Activated CD8-positive, alpha-beta T cell treated with anti-CD3 and anti-CD28 coated beads, Interleukin-2, amount 10 ng/mL, durations not matched to agents 7 days and 5 days (primary cell): ENCODE measurements at regions of chrX and their contacts with region 1.

Region 1: GRCh38 chrX:133921764-133922389 is 63.5 kb downstream of the GPC3 start:
- DNase-seq: peak; percentile 41
- ATAC-seq: no peak
- H3K4me3 Mint-ChIP-seq: no peak overlapping the region
- H3K27ac Mint-ChIP-seq: no peak overlapping the region
- H3K4me1 Mint-ChIP-seq: peaks cover 18% of the 10 kb centered on the region
- H3K27me3 Mint-ChIP-seq: no peaks in the 10 kb centered on the region

Region 2: GRCh38 chrX:134026565-134027311 is 104.9 kb after region 1 on chrX:
- CTCF ChIA-PET with region 1: interaction called, 11 read pairs
- POLR2A ChIA-PET with region 1: no interaction called
- DNase-seq: peak; percentile 37
- ATAC-seq: no peak
- H3K4me3 Mint-ChIP-seq: no peak overlapping the region
- H3K27ac Mint-ChIP-seq: no peak overlapping the region
- H3K4me1 Mint-ChIP-seq: peaks cover 8% of the 10 kb centered on the region
- H3K27me3 Mint-ChIP-seq: no peaks in the 10 kb centered on the region